Activated B cell treated with CpG ODN at 0.5 μM for 24 hours (primary cell): ENCODE measurements at regions of chr7 and their contacts with region 1.

Region 1: DNA sequence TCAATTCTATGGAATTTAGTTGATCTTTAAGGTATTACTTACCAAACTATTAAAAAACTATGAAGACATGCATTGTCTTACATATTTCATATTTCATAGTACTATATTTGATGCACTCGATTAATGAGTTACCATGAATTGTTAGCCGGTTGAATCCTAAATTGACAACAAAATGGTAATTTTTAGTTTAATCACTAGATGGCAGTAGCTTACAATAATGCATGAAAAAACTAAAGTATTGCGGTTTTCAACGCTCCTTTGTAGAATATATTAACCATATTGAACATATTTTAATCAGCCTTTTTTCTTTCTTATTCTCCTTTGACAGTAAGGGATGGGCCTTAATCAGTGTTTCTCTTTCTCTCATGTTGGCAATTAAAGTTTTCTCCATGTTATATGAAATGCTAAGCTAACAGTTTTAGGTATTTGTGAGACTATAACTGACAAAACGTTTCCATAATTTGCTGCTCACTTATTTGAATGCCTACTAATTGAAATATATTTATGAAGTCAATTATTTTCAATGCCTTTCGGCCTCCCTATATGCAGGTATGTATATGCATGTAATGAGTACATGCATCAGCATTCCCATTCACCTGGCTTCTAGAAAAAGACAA is 48.5 kb upstream of the ARL4A start:
- DNase-seq: no peak
- ATAC-seq: peak; percentile 55
- H3K4me3 Mint-ChIP-seq: no peak overlapping the region
- H3K27ac Mint-ChIP-seq: no peak overlapping the region
- H3K4me1 Mint-ChIP-seq: peaks cover 27% of the 10 kb centered on the region
- H3K27me3 Mint-ChIP-seq: no peaks in the 10 kb centered on the region
- CTCF ChIP-seq: peak; percentile 77

Region 2: DNA sequence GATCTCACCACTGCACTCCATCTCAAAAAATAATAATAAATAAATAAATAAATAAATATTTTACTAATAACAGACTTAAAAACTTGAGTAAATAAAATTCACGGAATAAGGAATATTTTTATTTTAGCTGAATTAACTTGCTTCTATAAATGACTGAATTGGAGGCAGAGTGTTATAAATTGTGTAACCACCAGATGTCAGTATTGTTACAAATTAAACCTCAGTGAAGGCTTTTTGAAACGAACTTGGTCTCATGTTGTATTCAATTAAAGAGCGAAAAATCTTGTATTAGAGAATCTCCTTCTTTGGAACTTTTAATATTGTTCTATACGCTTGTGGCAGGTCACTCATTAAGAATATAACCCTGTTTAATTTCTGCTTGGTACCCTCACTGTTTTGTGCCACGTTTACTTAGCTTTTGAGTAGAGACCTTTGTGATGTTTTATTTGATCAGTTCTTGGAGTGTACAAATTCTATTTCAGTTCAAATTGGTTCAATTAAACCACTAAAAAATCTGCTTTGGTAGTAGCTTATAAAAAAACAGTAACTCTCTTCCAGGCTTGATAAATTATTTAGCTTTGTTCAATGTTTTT is 114.1 kb before region 1 on chr7:
- CTCF ChIA-PET with region 1: interaction called, 5 read pairs
- POLR2A ChIA-PET with region 1: no interaction called
- intact Hi-C with region 1: loop called (anchors 1 kb)
- DNase-seq: no peak
- ATAC-seq: no peak
- H3K4me3 Mint-ChIP-seq: no peak overlapping the region
- H3K27ac Mint-ChIP-seq: no peak overlapping the region
- H3K4me1 Mint-ChIP-seq: no peaks in the 10 kb centered on the region
- H3K27me3 Mint-ChIP-seq: peaks cover 6% of the 10 kb centered on the region
- CTCF ChIP-seq: peak; percentile 59

Region 3: GRCh38 chr7:12783421-12784095 is 144.6 kb after region 1 on chr7:
- CTCF ChIA-PET with region 1: no interaction called
- POLR2A ChIA-PET with region 1: no interaction called
- intact Hi-C with region 1: no loop called
- DNase-seq: no peak
- ATAC-seq: no peak
- H3K4me3 Mint-ChIP-seq: no peak overlapping the region
- H3K27ac Mint-ChIP-seq: no peak overlapping the region
- H3K4me1 Mint-ChIP-seq: no peaks in the 10 kb centered on the region
- H3K27me3 Mint-ChIP-seq: no peaks in the 10 kb centered on the region
- CTCF ChIP-seq: no peak

Region 4: DNA sequence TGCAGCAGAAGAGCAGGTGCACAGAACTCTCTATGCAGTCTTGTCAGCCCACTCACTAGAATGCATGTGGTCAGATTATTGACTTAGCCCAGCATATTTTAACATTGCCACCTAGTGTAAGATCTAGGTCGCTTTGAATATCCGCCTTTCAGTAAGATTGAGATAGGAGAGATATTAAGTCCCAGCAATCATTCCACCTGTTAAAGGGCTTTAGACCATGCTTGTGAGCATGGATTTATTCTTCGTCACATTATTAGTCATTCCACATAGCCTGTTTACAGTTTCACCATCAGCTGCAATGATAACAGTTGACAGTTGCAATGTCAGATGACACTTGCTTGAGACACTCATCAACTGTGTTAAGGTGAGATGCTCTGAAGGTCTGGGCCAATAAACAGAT is 540.1 kb after region 1 on chr7:
- CTCF ChIA-PET with region 1: no interaction called
- POLR2A ChIA-PET with region 1: no interaction called
- intact Hi-C with region 1: loop called (anchors 1 kb)
- DNase-seq: no peak
- ATAC-seq: no peak
- H3K4me3 Mint-ChIP-seq: no peak overlapping the region
- H3K27ac Mint-ChIP-seq: no peak overlapping the region
- H3K4me1 Mint-ChIP-seq: no peaks in the 10 kb centered on the region
- H3K27me3 Mint-ChIP-seq: no peaks in the 10 kb centered on the region
- CTCF ChIP-seq: no peak

Region 5: GRCh38 chr7:13742811-13743210 is 1103.9 kb after region 1 on chr7:
- CTCF ChIA-PET with region 1: no interaction called
- POLR2A ChIA-PET with region 1: no interaction called
- intact Hi-C with region 1: loop called (anchors 5 kb)
- DNase-seq: no peak
- ATAC-seq: no peak
- H3K4me3 Mint-ChIP-seq: no peak overlapping the region
- H3K27ac Mint-ChIP-seq: no peak overlapping the region
- H3K4me1 Mint-ChIP-seq: no peaks in the 10 kb centered on the region
- H3K27me3 Mint-ChIP-seq: no peaks in the 10 kb centered on the region
- CTCF ChIP-seq: no peak